Left colon (tissue), 2 donors: ENCODE measurements at regions of chr12 and their contacts with region 1.

Region 1: DNA sequence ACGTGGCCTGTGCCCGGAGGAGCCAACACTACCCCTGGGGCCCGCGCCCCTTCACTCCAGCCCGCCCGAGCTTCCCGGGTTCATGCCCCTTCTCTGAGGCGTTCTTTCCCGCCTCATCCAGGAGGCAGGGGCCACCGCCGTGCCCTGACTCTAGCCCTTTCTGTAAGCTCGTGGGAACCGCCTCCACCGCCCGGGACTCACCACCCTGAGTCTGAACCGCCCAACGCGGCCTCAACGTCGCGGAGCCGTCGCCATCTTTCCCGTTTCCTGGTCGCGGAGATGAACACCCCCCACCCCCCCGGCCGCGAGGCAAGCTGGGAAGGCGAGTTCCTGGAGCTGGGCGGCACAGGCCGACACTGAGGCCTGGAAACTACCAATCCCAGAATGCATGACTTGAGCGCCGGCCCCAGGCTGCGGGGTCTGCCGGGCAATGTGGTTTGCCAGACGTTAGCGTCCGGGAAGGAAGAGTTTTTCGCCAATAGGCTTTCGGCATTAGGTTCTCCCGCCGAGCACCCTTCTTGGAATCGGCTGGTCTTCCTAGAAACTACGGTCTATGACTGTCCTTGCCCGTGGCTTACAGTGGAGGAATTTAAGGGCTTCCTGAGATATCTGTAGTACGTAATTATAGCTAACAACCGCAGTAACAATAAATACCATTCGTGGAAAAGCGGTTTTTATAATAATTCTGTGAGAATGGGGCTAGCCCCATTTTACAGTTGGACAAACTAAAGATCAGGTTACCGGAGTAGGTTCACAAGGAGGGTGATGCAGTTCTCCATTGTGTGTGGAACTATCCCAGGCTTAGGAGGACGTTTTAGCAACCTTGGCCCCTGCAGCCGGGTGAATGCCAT is at the start of gene DDX23:
- DNase-seq: peak; percentile 93 to 97
- ATAC-seq: peak; percentile 95
- total RNA-seq, gene DDX23: 74.6 to 79.8 TPM

Region 2: DNA sequence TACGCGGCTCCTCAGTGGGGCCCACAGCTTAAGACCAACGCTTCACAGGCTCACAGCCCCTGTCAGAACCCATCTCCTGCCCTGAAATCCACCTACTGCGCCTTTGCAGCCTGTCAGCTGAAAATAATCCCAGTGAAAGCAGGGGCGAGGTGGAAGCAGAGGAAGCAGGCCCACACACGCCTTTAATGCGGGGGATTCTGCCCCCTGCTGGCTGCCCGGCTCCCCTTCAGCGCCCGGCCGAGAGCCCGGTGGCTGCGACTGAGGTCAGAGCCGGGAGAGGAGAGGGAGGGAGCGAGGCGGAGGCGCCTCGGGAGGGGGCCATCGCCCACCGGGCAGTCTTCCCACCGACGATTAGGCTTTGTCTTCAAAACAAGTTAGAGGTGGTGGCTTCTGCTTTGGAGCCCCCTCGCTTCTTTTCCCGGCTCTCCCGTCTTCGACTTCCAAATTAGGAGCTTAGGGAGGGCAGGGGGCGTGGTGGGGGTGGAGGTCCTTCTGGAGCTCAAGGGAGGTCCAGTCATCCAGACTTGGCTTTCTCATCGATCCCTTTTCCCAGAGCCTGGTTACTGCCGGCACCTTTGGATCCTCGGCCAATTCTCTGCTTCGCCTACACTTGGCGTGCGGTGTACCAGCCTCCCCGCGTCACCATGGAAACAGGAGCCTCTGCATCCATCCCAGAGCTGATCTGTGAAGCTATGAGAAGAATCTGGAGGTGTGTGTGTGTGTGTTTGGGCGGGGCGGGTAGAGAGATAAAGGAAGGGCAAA is 38.7 kb after region 1 on chr12:
- intact Hi-C with region 1: loop called in 1 of 2 experiments (anchors 2 kb)
- DNase-seq: peak; percentile 53 to 88
- ATAC-seq: peak; percentile 100

Region 3: GRCh38 chr12:48936379-48936979 is 84.4 kb after region 1 on chr12:
- intact Hi-C with region 1: loop called in 1 of 2 experiments (anchors 10 kb)
- DNase-seq: peak; percentile 53 to 82
- ATAC-seq: peak; percentile 66

Region 4: DNA sequence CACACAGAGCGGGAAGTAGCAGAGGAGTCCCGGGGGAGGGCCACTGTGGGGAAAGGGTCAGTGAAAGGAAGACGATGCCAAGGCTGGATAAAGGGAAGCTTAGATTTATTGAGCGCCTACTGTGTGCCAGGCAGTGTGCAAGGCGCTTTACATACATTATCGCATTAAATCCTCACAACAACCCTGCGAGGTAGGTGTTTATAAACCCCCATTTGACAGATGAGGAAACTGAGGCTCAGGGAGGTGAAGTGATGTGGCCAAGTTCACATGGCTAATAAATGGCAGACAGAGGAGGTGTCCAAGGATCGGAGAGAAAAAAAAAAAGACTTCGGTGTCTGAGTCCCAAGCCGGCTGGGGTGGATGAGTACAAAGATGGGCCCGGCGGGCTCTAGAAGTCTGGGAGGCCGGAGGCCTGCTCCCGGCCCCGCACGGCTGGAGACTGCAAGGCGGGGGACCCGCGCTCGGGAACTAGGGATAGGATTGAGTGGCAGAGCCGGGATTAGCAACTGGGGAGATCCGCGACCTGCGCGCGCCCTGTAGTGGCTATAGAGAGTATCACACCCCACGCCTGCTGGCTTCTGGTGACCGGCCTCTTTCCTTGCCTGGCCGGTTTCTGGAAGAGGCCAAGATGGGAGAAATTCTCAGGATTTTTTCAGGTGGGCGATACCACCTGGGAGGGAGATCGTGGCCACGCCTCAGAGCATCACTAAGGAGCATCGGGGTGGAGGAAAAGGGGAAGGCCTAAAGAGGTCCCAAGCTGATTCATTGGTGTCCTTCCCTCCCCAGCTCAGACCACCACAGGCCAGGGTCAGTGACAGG is 143.2 kb after region 1 on chr12:
- intact Hi-C with region 1: loop called in 1 of 2 experiments (anchors 5 kb)
- DNase-seq: peak; percentile 70 to 88
- ATAC-seq: peak; percentile 73